CD14-positive monocyte (primary cell): ENCODE measurements at regions of chr12 and their contacts with region 1.

Region 1: DNA sequence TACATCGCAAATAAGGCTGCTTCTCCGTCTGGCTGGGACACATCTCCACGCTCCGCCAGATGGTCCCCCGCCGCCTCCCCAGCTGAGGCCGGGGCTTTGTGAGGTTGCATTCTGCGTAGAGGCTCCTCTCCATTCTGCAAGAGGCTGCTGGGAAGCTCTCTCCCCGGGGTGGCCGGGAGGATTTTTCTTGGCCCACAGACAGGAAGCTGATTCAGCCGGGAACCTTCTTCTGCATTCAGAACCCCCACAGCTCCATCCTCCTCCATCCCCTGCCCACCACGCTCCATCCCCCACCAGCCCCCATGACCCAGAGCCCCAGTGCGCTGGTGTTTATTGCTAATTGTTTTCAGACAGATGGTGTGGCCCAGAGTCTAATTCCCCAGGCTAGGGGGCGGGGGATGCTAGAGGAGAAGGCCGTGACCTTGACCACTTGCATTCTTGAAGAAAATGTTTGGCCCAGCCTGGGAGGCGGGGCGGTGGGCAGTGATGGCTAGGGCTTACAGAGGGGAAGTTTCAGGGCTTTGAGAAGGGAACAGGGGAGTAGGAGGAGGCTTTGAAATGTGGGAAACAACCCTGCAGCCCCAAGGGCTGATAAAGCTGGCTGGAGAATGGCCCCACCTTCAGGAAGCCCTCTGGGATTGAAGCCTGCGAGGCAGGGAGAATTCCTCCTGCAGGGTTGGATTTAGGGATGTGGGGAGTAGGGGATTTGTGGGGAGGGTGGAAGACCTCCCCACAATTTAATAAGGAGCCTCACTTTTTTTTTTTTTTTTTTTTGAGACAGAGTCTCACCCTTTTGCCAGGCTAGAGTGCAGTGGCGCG is 88.5 kb upstream of the NCOR2 start:
- DNase-seq: peak; percentile 53 to 88 (median 79)
- H3K4me3 ChIP-seq: no peak overlapping the region
- H3K4me3 Mint-ChIP-seq: peak overlapping the region; percentile 31 to 67
- H3K27ac ChIP-seq: peak overlapping the region; percentile 34 to 65
- H3K27ac Mint-ChIP-seq: peak overlapping the region; percentile 45 to 91 (median 84)
- H3K4me1 ChIP-seq: peaks cover 67 to 71% of the 10 kb centered on the region in 2 donors
- H3K4me1 Mint-ChIP-seq: peaks cover 74% of the 10 kb centered on the region
- H3K27me3 ChIP-seq: no peaks in the 10 kb centered on the region
- H3K27me3 Mint-ChIP-seq: no peaks in the 10 kb centered on the region
- CTCF ChIP-seq: peak; percentile 35

Region 2: GRCh38 chr12:124567661-124568373 is 88.1 kb before region 1 on chr12:
- intact Hi-C with region 1: loop called in 1 of 2 experiments (anchors 10 kb)
- DNase-seq: peak; percentile 91 to 95 (median 95)
- H3K4me3 ChIP-seq: peak overlapping the region; percentile 14 to 74 (median 24)
- H3K4me3 Mint-ChIP-seq: peak overlapping the region; percentile 77 to 78
- H3K27ac ChIP-seq: peak overlapping the region; percentile 86 to 96
- H3K27ac Mint-ChIP-seq: peak overlapping the region; percentile 94 to 98 (median 96)
- H3K4me1 ChIP-seq: peaks cover 44 to 50% of the 10 kb centered on the region in 2 donors
- H3K4me1 Mint-ChIP-seq: peaks cover 47% of the 10 kb centered on the region
- H3K27me3 ChIP-seq: no peaks in the 10 kb centered on the region
- H3K27me3 Mint-ChIP-seq: no peaks in the 10 kb centered on the region
- CTCF ChIP-seq: no peak

Region 3: DNA sequence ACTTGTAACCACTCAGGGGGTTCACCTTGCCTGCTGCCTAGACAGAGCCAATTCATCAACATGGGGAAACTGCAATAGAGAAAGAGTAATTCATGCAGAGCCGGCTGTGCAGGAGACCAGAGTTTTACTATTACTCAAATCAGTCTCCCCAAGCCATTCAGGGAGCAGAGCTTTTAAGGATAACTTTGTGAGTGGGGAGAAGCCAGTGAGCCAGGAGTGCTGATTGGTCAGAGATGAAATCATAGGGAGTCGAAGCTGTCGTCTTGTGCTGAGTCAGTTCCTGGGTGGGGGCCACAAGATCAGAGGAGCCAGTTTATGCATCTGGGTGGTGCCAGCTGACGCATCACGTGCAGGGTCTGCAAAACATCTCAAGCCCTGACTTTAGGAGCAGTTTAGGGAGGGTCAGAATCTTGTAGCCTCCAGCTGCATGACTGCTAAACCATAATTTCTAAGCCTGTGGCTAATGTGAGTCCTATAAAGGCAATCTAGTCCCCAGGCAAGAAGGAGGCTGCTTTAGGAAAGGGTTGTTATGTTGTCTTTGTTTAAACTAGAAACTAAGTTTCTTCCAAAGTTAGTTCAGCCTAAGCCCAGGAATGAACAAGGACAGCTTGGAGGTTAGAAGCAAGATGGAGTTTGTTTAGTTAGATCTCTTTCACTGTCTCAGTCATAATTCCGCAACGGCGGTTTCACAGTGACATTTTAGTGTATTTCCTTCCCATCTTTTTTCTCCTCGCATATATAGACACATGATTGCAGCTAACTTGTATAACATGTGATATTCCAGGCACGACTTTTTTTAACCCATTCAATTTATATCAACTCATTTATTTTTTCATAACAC is 19.5 kb before region 1 on chr12:
- intact Hi-C with region 1: loop called in 1 of 2 experiments (anchors 2 kb)
- DNase-seq: peak; percentile 85 to 93 (median 93)
- H3K4me3 ChIP-seq: peak overlapping the region in 1 of 3 experiments; percentile 2
- H3K4me3 Mint-ChIP-seq: no peak overlapping the region
- H3K27ac ChIP-seq: peak overlapping the region; percentile 14 to 80
- H3K27ac Mint-ChIP-seq: peak overlapping the region; percentile 85 to 96 (median 90)
- H3K4me1 ChIP-seq: peaks cover 77 to 90% of the 10 kb centered on the region in 2 donors
- H3K4me1 Mint-ChIP-seq: peaks cover 70% of the 10 kb centered on the region
- H3K27me3 ChIP-seq: no peaks in the 10 kb centered on the region
- H3K27me3 Mint-ChIP-seq: peaks cover 0 to 5% (median 4%) of the 10 kb centered on the region in 3 donors
- CTCF ChIP-seq: no peak